ENCODE measurements at regions of chr17 and their contacts with region 1.

Region 1: DNA sequence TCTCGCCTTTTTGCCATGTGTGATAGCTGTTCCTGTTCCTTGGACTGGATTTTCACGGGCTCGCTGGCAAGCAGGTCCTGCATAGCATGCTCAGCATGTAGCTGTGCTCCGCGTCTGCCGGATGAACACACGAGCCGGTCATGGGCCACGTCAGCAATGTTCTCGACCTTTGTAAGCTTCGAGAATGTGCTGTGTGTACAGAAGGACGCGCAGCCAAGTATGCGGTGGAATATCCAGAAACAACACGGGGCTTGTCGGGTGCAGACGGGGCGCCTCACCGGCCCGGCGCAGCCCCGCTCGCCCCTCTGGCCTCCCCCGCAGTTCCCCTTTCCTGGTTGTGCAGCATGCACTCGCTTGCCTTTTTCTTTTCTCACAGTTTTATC is 42.2 kb downstream of the RPTOR start:
- DNase-seq: no peak
- H3K4me3 Mint-ChIP-seq: no peak overlapping the region
- H3K27ac Mint-ChIP-seq: peak overlapping the region; percentile 3
- H3K4me1 Mint-ChIP-seq: peaks cover 55% of the 10 kb centered on the region
- H3K27me3 Mint-ChIP-seq: no peaks in the 10 kb centered on the region

Region 2: DNA sequence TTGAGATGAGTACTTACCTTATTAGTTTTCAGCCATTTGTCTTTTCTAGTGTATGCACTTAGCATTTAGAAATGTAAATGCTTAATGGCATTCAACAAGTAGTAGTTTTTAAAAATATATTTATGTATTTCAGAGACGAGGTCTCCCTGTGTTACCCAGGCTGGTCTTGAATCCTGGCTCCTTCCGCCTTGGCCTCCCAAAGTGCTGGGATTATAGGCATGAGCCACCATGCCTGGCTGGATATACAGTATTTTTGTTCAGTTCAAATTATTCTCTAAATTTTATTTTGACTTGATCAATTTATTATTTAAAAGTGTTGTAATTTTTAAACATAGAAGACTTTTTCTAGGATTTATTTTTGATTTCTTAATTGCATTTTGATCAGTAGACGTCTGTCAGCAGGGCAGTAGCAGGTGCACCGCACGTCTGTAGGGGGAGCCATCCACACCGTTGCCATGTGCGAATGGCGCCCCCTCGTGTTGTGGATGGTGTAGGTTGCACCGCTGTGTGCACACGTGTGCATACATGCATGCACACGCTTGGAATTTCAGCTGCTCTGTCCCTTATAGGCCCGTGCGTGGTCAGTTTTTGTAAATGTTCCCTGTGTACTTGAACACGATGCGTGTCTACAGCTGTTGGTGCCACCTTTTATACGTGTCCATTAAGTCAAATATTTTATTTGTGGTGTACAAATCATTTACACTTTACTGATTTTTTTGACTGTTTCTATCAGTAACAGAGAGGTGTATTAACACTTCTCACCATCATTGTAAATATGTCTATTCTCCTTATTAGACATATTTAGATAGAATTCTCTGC is 11.6 kb before region 1 on chr17:
- CTCF ChIA-PET with region 1: interaction called, 27 read pairs
- DNase-seq: peak; percentile 95
- H3K4me3 Mint-ChIP-seq: no peak overlapping the region
- H3K27ac Mint-ChIP-seq: peak overlapping the region; percentile 56
- H3K4me1 Mint-ChIP-seq: peaks cover 19% of the 10 kb centered on the region
- H3K27me3 Mint-ChIP-seq: no peaks in the 10 kb centered on the region